ENCODE measurements at regions of chr10 and their contacts with region 1.

Region 1: DNA sequence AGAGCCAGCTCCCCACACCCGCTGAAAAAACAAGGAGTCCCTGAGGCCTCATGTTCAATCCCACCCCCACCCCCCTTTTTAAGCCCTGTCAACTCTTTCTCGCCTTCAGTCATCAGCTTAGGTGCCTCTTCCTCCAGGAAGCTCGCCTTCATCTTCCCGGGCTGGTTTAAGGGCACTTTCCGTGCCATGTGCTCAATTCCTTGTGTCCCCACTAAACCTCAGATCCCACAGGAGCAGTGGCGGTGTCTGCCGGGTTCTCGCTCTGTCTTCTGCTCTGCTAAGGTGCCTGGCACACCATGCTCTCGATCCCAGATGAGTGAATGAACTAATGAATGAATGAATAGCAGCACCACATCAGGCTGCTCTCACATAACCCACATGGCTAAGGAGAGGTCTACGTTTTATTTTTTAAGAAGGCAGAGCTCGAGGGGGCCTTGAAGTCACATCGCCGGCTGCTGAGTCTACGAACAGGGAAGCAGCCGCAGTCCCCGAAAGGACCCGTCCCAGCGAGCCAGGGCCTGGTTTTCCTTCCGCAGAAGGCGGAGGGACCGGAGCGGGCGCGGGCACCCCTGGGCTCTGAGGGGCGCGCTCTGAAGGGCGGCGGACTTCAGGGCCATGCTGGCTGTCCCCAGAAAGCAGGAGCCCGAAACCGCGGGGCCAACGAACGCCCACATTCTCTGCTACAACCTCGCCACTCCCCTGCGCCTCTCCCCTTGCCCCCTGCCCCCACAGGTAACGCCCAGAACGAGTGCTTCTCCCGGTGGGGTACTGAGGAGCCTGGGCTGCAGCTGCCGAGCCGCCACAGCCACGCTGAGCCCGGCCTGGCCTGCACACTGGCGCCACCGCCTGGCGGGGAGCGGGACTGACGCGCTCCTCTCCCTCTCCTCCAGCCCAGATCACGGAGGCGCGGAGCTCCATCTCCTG is 73.4 kb upstream of the KCNMA1 start:
- DNase-seq: peak; percentile 82
- H3K4me3 ChIP-seq: peak overlapping the region; percentile 15 to 57 (median 50)
- H3K27ac ChIP-seq: peak overlapping the region in 1 of 4 donors; percentile 35
- H3K4me1 ChIP-seq: peaks cover 0 to 9% (median 5%) of the 10 kb centered on the region in 4 donors
- H3K27me3 ChIP-seq: no peaks in the 10 kb centered on the region
- CTCF ChIP-seq: peak; percentile 86 to 99 (median 96)
- EP300 ChIP-seq: no peak
- POLR2A ChIP-seq: no peak

Region 2: DNA sequence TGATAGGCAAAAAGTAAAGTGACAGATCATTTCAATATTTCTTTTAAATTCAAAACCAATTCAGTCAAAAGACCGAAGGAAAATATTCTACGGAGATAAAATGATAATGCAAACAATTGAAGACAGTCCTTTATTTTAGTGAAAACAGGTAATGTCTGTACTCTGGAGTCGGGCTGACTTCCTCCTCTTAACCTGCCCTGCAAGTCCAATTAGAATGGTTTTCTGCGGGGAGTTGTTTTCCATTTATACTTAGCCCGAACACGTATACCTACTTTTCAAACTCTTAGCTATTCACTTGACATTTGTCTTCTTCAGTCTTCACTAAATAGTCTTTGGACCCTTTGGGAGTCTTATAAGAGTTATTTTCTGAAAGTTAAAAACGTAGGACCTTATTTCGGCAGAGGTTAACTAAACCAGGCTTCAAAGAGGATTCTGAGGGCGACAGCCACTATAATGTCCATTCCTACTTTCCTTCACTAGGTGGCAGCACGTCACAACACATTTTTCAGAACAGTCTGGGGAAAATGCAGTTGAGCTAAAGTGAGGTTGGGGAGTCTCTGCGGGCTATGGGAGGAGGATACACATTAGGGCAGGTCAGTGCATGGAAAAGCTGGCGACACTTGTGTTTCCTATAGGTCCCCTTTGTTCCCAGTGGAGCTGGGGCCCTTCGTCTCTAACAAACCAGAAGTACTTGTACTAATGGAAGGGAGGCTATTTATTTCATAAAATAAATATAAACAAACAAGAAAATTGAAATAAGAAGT is 545.4 kb before region 1 on chr10:
- intact Hi-C with region 1: loop called (anchors 5 kb)
- DNase-seq: peak; percentile 69
- H3K4me3 ChIP-seq: no peak overlapping the region
- H3K27ac ChIP-seq: peak overlapping the region in 2 of 4 donors; percentile 61 to 64
- H3K4me1 ChIP-seq: peaks cover 0 to 34% (median 7%) of the 10 kb centered on the region in 4 donors
- H3K27me3 ChIP-seq: no peaks in the 10 kb centered on the region
- CTCF ChIP-seq: peak; percentile 66 to 80 (median 76)
- EP300 ChIP-seq: no peak
- POLR2A ChIP-seq: no peak

Region 3: DNA sequence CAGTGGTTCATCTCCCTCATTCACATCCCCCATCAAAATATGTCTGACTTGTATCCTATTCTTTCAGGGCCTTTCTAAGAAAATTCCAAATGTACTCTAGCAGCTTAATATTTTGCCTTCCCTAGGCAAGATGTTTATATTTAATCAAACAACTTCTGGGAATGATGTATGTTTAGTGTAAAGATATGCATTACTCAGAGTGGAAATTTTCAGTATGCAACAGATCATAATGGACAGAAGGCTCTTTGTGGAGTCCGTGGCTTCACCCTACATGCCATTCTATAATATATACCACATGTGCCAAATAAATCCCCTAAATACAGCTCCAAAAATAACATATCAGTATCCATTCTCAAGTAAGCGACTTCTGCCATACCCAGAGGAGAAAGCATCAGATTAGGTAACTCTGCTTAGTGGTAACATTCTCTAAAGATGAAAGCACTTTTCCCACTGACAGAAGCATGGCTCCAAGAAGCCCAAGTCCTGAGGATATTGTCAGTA is 390.0 kb before region 1 on chr10:
- intact Hi-C with region 1: no loop called
- DNase-seq: no peak
- H3K4me3 ChIP-seq: no peak overlapping the region
- H3K27ac ChIP-seq: peak overlapping the region in 2 of 4 donors; percentile 55 to 58
- H3K4me1 ChIP-seq: peaks cover 0 to 49% (median 37%) of the 10 kb centered on the region in 4 donors
- H3K27me3 ChIP-seq: no peaks in the 10 kb centered on the region
- CTCF ChIP-seq: no peak
- EP300 ChIP-seq: no peak
- POLR2A ChIP-seq: no peak

Region 4: DNA sequence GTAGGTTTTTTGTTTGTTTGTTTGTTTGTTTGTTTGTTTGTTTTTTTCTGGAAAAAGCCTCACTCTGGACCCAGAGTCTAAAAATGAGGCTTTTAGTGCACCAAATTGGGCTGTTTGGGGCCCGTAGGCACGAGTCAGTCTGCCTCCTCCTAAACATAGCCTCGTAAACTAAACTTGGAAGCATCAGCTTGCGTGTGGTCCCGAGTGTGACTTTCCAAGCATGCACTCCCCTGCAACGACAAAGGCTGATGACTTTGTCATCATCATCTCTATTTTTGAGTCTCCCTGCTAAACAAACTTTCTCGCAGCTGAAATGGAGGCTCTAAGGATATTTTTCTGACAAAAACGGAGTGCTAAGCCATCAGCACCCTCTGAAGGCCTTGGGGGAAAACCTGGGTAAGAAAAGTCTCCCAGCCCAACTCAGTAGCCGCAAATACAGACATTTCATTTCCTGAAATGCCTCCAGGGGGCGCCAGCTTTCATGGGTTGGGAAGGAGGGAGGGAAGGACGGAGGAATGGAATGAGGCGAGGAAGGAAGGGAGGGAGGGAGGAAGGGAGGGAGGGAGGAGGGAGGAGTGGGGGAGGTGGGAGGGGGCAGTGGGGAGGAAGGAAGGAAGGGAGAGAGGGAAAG is 319.3 kb before region 1 on chr10:
- intact Hi-C with region 1: loop called (anchors 5 kb)
- DNase-seq: peak; percentile 92
- H3K4me3 ChIP-seq: no peak overlapping the region
- H3K27ac ChIP-seq: peak overlapping the region; percentile 61 to 87 (median 78)
- H3K4me1 ChIP-seq: peaks cover 0 to 87% (median 82%) of the 10 kb centered on the region in 4 donors
- H3K27me3 ChIP-seq: no peaks in the 10 kb centered on the region
- CTCF ChIP-seq: peak; percentile 53 to 72 (median 67)
- EP300 ChIP-seq: no peak
- POLR2A ChIP-seq: no peak

Region 5: GRCh38 chr10:77649333-77650331 is 61.4 kb before region 1 on chr10:
- intact Hi-C with region 1: loop called (anchors 5 kb)
- DNase-seq: no peak
- H3K4me3 ChIP-seq: no peak overlapping the region
- H3K27ac ChIP-seq: no peak overlapping the region
- H3K4me1 ChIP-seq: no peaks in the 10 kb centered on the region
- H3K27me3 ChIP-seq: no peaks in the 10 kb centered on the region
- CTCF ChIP-seq: no peak
- EP300 ChIP-seq: no peak
- POLR2A ChIP-seq: no peak

Measured in sigmoid colon (tissue), 7 donors.